AG04449 (cell line): ENCODE measurements at regions of chr5 and their contacts with region 1.

Region 1: DNA sequence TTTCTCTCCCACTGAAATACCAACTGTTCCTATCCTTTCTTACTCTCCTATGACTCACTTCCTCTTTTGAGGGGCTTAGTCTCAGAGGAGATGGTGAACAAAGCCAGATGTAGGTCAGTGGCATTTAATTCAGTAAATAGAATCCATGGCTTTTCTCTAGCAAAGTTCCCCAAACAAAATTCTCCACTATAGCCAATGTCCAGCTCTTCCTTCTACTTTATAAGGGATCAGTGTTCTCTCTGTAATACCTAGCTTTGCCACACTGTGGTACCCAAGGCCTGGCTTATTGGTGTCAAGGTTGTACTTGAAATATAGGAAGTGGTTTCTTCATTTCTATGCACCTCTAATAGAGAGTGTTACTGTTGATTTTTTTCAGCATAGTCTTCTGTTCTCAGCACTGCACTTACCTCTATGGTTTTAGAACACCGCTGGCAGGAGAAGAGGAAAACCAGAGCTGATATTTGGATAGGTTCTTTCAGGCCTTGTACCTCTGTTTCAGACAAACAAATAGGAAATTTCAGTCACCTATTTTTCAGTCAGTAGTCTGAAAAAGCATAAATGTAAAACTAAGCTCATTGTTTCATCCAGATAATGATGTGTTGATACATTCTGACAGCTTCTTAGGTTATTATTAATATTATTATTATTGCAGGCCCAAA is 40.6 kb upstream of the ITGA2 start:
- DNase-seq: no peak
- H3K4me3 ChIP-seq: no peak overlapping the region
- CTCF ChIP-seq: peak; percentile 64

Region 2: GRCh38 chr5:52864371-52864770 is 84.2 kb before region 1 on chr5:
- CTCF ChIA-PET with region 1: no interaction called
- POLR2A ChIA-PET with region 1: no interaction called
- DNase-seq: peak; percentile 84
- H3K4me3 ChIP-seq: no peak overlapping the region
- CTCF ChIP-seq: no peak

Region 3: DNA sequence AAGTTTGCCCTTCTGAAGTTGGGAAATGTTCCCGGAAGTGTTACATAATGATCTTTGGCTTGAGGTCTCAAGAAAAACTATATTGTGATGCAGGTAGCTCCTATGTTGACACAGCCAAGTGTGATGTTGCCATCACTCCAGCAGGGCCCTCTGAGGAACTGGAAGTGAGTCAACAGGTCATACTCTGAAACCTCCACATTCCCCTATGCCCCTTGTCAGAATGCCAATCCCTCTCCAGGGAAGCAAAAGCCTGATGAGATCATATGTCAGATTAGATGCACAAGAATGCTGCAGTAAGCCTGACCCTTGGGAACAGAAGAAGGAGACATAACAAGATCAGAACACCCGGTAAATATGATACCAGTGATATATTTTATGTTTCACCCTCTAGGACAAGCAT is 26.2 kb before region 1 on chr5:
- CTCF ChIA-PET with region 1: interaction called, 15 read pairs
- POLR2A ChIA-PET with region 1: no interaction called
- DNase-seq: peak; percentile 74
- H3K4me3 ChIP-seq: no peak overlapping the region
- CTCF ChIP-seq: no peak

Region 4: DNA sequence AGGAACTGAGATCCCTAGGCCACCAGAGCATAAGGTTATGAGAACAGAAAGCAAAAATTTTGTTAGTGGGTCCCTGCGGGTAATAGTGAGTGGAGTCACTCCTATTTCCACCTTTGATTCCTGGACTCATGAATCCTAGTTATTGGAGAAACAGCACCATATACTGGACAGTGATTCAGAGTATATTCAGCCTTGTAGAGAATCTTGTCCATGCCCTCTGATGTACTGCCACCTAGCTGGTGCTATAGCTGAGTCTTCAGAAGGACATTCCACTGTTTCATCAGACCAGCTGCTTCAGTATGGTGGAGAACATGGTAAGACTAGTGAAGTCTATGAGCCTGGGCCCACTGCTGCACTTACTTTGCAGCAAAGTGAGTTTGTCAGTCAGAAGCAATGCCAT is 15.6 kb after region 1 on chr5:
- CTCF ChIA-PET with region 1: interaction called, 24 read pairs
- POLR2A ChIA-PET with region 1: no interaction called
- DNase-seq: no peak
- H3K4me3 ChIP-seq: no peak overlapping the region
- CTCF ChIP-seq: peak; percentile 7

Region 5: GRCh38 chr5:53035868-53036381 is 87.4 kb after region 1 on chr5:
- CTCF ChIA-PET with region 1: interaction called, 11 read pairs
- POLR2A ChIA-PET with region 1: no interaction called
- DNase-seq: no peak
- H3K4me3 ChIP-seq: no peak overlapping the region
- CTCF ChIP-seq: peak; percentile 6

Region 6: DNA sequence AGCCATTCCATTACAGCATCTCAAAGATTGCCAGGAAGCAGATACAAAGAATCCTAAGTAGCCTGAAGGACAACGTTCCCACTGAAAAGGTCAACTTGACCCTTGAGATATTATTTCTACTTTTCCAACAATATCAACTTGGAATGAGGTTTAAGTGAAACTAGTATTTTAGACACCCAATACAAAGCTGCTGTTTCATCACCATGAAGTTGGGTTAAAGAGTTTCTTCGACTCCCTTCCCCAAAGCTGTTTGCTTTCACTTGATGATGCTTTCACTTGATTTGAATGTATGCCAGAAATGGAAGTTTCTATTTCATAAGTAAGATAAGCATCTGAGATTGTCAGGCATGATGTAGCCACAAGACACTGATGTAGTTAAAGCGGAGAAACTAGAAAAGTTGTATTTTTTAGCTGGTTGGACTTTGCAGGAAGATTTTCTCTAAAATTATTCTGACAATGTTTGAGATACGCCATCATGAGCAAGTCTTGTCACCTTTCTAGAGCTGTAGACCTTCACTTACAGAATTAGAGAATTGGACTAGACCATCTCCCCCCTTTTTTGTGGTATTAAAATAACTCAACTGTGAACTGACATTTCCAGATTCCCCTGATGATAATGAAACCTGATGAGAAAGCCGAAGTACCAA is 140.9 kb after region 1 on chr5:
- CTCF ChIA-PET with region 1: interaction called, 209 read pairs
- POLR2A ChIA-PET with region 1: interaction called, 3 read pairs
- DNase-seq: no peak
- H3K4me3 ChIP-seq: no peak overlapping the region
- CTCF ChIP-seq: no peak

Region 7: DNA sequence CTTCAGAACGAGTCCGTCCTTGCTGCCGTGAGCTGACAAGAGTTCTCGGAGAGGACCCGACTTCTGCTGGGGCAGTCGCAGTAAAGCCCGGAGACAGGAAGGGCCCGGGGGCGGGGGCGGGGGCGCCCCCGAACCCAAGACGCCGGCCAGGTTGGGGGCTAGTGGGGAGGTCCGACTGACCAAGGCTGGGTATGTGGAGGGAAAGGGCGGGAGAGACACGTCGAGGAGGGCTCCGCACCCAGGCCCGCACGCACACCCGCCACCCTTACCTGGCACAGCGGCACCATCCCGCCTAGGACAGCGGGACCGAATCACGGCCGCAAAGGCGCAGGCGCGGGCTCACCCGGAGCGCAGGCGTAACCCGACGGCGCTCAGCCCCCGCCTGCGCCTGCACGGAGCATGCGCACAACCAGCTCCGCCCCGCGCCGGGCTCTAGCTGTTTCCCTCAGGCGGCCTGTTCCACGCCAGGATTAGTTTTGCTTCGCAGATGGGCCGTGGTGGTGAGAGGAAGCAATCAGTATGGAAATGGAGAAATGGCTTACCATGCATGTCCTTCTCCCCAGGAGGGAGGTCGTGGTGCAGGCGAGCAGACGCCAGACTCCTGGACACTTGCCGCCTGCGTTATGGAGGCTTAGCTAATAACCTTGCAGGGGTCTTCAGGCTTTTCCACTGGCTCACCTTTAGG is 161.0 kb after region 1 on chr5 and contains the start of gene MOCS2:
- CTCF ChIA-PET with region 1: interaction called, 59 read pairs
- POLR2A ChIA-PET with region 1: no interaction called
- DNase-seq: no peak
- H3K4me3 ChIP-seq: peak within 1 kb of the TSS; percentile 84
- CTCF ChIP-seq: no peak